CD4-positive, alpha-beta T cell (primary cell): ENCODE measurements at regions of chr2 and their contacts with region 1.

Region 1: DNA sequence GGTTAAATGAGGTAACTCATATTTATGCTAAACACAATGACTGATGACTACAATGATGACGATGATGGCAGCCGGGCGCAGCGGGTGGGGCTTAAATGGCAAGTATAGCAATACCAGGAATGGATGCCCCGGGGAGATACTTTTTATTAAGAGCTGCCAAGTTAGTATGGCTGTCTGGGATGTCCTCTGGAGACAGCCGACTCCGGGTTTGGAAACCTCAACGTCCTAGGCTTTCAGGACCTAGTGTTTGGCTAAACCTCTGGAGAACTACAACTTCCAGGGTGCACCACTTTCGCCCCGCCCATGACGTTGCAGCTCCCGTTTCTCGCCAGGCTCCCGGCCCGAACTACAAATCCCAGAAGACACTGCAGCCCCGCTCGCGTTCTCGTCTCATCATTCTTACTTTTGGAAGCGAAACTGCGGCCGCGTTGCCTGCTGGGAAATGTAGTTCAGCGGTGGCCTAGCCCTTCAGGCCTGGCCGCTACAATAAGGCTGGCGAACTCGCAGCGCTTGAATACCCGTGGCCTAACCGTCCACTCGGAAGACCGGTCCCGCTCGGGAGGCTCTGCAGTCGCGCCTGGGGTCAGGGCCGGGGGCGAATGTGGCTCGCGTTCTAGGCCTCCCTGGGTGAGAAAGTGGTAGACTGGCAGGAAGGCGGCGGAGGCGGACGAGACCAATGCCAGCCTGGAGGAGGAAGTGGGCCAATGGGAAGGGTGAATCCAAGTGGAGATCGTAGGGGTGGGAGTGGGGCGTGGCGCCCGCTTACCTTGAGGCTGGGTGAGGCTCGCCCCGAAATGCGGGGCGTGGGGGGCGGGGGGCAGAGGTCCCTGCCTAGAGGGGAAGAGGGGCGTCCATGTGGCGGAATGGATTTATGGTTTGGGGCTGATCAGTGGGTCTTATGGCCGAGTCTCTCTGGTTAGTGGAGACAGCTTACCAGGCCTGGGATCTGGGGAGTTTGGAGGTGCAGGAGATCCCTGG is at the start of gene SMARCAL1:
- DNase-seq: peak; percentile 95 to 99 (median 98)
- ATAC-seq: peak; percentile 93
- H3K4me3 ChIP-seq: peak within 1 kb of the TSS; percentile 79
- H3K4me3 Mint-ChIP-seq: peak within 1 kb of the TSS; percentile 99
- H3K27ac ChIP-seq: peak within 1 kb of the TSS; percentile 70 to 86
- H3K27ac Mint-ChIP-seq: peak within 1 kb of the TSS; percentile 95
- H3K4me1 ChIP-seq: peaks cover 13% of the 10 kb centered on the region
- H3K4me1 Mint-ChIP-seq: peaks cover 24% of the 10 kb centered on the region
- H3K27me3 ChIP-seq: no peaks in the 10 kb centered on the region
- H3K27me3 Mint-ChIP-seq: no peaks in the 10 kb centered on the region
- CTCF ChIP-seq: no peak
- total RNA-seq, gene SMARCAL1: 6.3 TPM

Region 2: GRCh38 chr2:215311625-215312396 is 1100.5 kb before region 1 on chr2 and contains the start of gene ATIC:
- CTCF ChIA-PET with region 1: no interaction called
- POLR2A ChIA-PET with region 1: no interaction called
- intact Hi-C with region 1: loop called in 1 of 2 experiments (anchors 5 kb)
- DNase-seq: peak; percentile 73 to 93 (median 86)
- ATAC-seq: peak; percentile 96
- H3K4me3 ChIP-seq: peak within 1 kb of the TSS; percentile 76
- H3K4me3 Mint-ChIP-seq: peak within 1 kb of the TSS; percentile 96
- H3K27ac ChIP-seq: peak within 1 kb of the TSS; percentile 21 to 56
- H3K27ac Mint-ChIP-seq: peak within 1 kb of the TSS; percentile 92
- H3K4me1 ChIP-seq: peaks cover 26% of the 10 kb centered on the region
- H3K4me1 Mint-ChIP-seq: peaks cover 38% of the 10 kb centered on the region
- H3K27me3 ChIP-seq: no peaks in the 10 kb centered on the region
- H3K27me3 Mint-ChIP-seq: no peaks in the 10 kb centered on the region
- CTCF ChIP-seq: no peak
- total RNA-seq, gene ATIC: 40.5 to 43.3 TPM

Region 3: DNA sequence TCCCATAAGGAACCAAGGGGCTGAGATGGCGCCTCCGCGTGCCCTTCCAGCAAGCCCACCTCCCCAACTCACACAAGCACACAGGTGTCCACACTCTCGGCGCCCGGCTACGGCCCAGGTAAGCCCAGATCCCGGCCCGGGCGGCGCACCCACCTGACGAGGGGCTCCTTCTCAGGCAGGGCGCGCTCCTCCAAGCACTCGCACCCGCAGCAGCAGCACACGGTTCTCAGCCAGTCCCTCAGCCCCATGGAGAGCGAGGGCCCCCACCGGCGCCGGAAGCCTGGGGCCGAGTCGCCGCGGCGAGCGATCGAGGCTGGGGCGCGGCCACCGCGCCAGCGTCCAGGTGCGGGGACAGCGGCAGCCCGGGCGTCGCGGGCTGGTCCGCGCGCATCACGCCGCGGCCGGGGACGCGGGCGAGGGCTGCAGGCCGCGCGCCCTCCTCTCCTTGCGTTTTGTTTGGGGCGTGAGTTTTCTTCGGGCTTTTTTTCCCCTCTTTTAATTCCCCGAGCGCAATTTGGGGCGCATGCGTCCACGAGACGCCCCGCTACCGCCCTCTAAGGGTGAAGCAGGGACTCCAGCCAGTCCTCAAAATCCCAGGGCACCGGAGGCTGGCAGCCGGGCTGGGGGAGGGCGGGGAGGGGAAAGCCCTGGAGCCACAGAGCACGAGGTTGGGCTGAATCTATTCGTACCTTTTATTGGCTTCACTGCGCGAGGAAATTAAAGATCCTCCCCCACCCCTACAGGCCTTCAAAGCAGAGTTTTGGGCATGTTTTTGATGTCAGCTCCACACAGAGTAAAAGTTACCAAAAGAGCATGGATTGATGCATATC is 399.0 kb before region 1 on chr2 and contains the start of gene MREG:
- CTCF ChIA-PET with region 1: no interaction called
- POLR2A ChIA-PET with region 1: no interaction called
- intact Hi-C with region 1: loop called in 1 of 2 experiments (anchors 5 kb)
- DNase-seq: peak; percentile 66 to 92 (median 78)
- ATAC-seq: peak; percentile 77
- H3K4me3 ChIP-seq: peak within 1 kb of the TSS; percentile 77
- H3K4me3 Mint-ChIP-seq: peak within 1 kb of the TSS; percentile 89
- H3K27ac ChIP-seq: no peak within 1 kb of the TSS
- H3K27ac Mint-ChIP-seq: peak within 1 kb of the TSS; percentile 45
- H3K4me1 ChIP-seq: peaks cover 33% of the 10 kb centered on the region
- H3K4me1 Mint-ChIP-seq: peaks cover 53% of the 10 kb centered on the region
- H3K27me3 ChIP-seq: no peaks in the 10 kb centered on the region
- H3K27me3 Mint-ChIP-seq: no peaks in the 10 kb centered on the region
- CTCF ChIP-seq: peak; percentile 76
- total RNA-seq, gene MREG: 1.8 to 2.8 TPM

Region 4: DNA sequence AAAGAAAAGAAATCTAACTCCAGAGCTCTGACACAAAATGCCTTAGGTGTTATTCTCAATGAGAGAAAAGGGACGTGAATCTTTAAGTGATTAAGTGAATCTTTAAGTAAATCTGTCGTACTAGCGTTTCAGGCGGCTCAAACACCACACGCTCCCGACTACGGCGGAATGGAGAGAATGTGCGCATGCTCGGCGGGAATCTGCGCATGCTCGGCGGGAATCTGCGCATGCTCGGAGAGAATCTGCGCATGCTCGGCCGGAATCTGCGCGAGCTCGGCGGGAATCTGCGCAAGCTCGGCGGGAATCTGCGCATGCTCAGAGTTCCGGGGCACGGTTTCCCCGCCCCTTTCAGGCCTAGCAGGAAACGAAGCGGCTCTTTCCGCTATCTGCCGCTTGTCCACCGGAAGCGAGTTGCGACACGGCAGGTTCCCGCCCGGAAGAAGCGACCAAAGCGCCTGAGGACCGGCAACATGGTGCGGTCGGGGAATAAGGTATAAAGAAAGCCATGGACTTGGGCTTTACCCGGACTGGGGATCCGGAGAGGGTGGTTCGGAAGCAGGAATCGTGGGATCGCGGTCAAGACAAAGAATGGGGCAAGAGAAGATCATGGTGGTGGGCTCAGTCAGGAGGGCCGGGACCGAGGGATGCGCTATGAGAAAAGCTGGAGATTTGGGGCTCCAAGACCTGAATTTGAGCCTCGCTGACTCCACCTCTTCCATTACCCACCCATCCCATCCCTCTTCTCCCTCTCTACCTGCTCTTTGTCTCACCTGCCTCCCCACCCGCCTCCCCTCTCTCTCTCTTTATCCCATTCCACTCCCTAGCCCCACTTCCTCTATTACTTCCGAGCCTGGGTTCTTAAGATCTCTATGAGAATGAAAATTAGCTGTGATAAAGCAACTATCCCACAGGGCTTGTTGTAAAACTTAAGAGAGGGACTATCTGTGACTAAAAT is 303.1 kb before region 1 on chr2 and contains the start of gene XRCC5:
- CTCF ChIA-PET with region 1: interaction called, 4 read pairs
- POLR2A ChIA-PET with region 1: interaction called, 5 read pairs
- intact Hi-C with region 1: loop called (anchors 1 to 2 kb)
- DNase-seq: peak; percentile 94 to 100 (median 98)
- ATAC-seq: peak; percentile 82
- H3K4me3 ChIP-seq: peak within 1 kb of the TSS; percentile 82
- H3K4me3 Mint-ChIP-seq: peak within 1 kb of the TSS; percentile 100
- H3K27ac ChIP-seq: peak within 1 kb of the TSS; percentile 88 to 94
- H3K27ac Mint-ChIP-seq: peak within 1 kb of the TSS; percentile 97
- H3K4me1 ChIP-seq: peaks cover 36% of the 10 kb centered on the region
- H3K4me1 Mint-ChIP-seq: peaks cover 57% of the 10 kb centered on the region
- H3K27me3 ChIP-seq: no peaks in the 10 kb centered on the region
- H3K27me3 Mint-ChIP-seq: no peaks in the 10 kb centered on the region
- CTCF ChIP-seq: no peak
- total RNA-seq, gene XRCC5: 126 to 129 TPM

Region 5: GRCh38 chr2:216114714-216115557 is 297.4 kb before region 1 on chr2:
- CTCF ChIA-PET with region 1: interaction called, 4 read pairs
- POLR2A ChIA-PET with region 1: no interaction called
- intact Hi-C with region 1: loop called in 1 of 2 experiments (anchors 1 kb)
- DNase-seq: peak; percentile 94 to 99 (median 97)
- ATAC-seq: peak; percentile 93
- H3K4me3 ChIP-seq: peak overlapping the region; percentile 65
- H3K4me3 Mint-ChIP-seq: peak overlapping the region; percentile 90
- H3K27ac ChIP-seq: peak overlapping the region; percentile 69 to 78
- H3K27ac Mint-ChIP-seq: peak overlapping the region; percentile 90
- H3K4me1 ChIP-seq: peaks cover 42% of the 10 kb centered on the region
- H3K4me1 Mint-ChIP-seq: peaks cover 95% of the 10 kb centered on the region
- H3K27me3 ChIP-seq: no peaks in the 10 kb centered on the region
- H3K27me3 Mint-ChIP-seq: no peaks in the 10 kb centered on the region
- CTCF ChIP-seq: peak; percentile 92

Region 6: GRCh38 chr2:216350214-216350789 is 62.0 kb before region 1 on chr2:
- CTCF ChIA-PET with region 1: no interaction called
- POLR2A ChIA-PET with region 1: interaction called, 14 read pairs
- intact Hi-C with region 1: loop called in 1 of 2 experiments (anchors 5 kb)
- DNase-seq: peak in 8 of 14 experiments; percentile 8 to 66 (median 13)
- ATAC-seq: peak; percentile 15
- H3K4me3 ChIP-seq: no peak overlapping the region
- H3K4me3 Mint-ChIP-seq: peak overlapping the region; percentile 12
- H3K27ac ChIP-seq: no peak overlapping the region
- H3K27ac Mint-ChIP-seq: peak overlapping the region; percentile 78
- H3K4me1 ChIP-seq: peaks cover 68% of the 10 kb centered on the region
- H3K4me1 Mint-ChIP-seq: peaks cover 88% of the 10 kb centered on the region
- H3K27me3 ChIP-seq: no peaks in the 10 kb centered on the region
- H3K27me3 Mint-ChIP-seq: no peaks in the 10 kb centered on the region
- CTCF ChIP-seq: no peak

Region 7: GRCh38 chr2:216498418-216499413 is 86.4 kb after region 1 on chr2 and contains the start of gene RPL37A:
- CTCF ChIA-PET with region 1: no interaction called
- POLR2A ChIA-PET with region 1: interaction called, 8 read pairs
- intact Hi-C with region 1: loop called (anchors 1 to 2 kb)
- DNase-seq: peak; percentile 79 to 96 (median 86)
- ATAC-seq: peak; percentile 92
- H3K4me3 ChIP-seq: peak within 1 kb of the TSS; percentile 72
- H3K4me3 Mint-ChIP-seq: peak within 1 kb of the TSS; percentile 97
- H3K27ac ChIP-seq: peak within 1 kb of the TSS; percentile 77 to 82
- H3K27ac Mint-ChIP-seq: peak within 1 kb of the TSS; percentile 94
- H3K4me1 ChIP-seq: peaks cover 27% of the 10 kb centered on the region
- H3K4me1 Mint-ChIP-seq: peaks cover 54% of the 10 kb centered on the region
- H3K27me3 ChIP-seq: no peaks in the 10 kb centered on the region
- H3K27me3 Mint-ChIP-seq: no peaks in the 10 kb centered on the region
- CTCF ChIP-seq: no peak
- total RNA-seq, gene RPL37A: 4,138 to 4,142 TPM